ENCODE measurements at regions of chr20 and their contacts with region 1.

Region 1: DNA sequence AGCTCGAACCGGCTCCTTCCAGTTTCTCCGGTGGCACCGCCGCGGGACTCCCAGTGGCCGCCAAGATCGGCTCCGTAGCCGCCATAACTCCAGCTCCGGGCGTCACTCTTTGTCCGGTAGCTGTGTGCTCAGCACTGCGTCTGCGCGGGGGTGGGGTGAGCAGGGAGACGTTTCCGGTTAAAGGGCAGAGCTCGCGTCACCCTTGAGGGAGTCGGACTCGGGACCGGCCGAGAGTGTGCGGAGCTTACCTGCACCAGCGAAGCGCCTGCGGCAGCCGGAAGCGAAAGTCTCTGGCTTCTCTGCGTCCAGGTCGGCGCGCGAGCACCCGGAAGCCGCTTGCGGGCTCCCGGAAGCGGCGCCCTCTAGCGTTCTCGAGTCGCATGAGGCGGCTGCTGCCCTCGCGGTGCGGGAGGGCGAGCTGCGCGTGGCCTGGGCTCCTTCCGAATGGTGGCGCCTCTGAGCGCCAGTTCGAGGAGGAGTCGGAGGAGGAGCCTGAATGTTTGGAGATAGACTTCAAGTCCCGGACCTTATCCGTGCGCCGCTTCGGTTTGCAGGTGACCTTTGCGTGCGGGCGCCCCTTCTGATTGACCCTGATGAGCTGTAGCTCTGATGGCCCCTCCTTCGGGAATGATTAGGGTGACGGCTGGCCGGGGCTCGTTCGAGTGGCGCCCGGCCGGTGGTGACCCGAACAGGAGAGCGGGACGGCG is at the start of gene SCAND1:
- DNase-seq: peak; percentile 84
- H3K4me3 ChIP-seq: peak within 1 kb of the TSS; percentile 98
- H3K27me3 ChIP-seq: no peaks in the 10 kb centered on the region
- CTCF ChIP-seq: peak; percentile 98
- polyA plus RNA-seq, gene SCAND1: 10.8 and 15.8 TPM in 2 replicates

Region 2: GRCh38 chr20:35942243-35942642 is 12.1 kb before region 1 on chr20:
- CTCF ChIA-PET with region 1: interaction called, 18 read pairs
- POLR2A ChIA-PET with region 1: no interaction called
- DNase-seq: no peak
- H3K4me3 ChIP-seq: no peak overlapping the region
- H3K27me3 ChIP-seq: no peaks in the 10 kb centered on the region
- CTCF ChIP-seq: no peak

Region 3: DNA sequence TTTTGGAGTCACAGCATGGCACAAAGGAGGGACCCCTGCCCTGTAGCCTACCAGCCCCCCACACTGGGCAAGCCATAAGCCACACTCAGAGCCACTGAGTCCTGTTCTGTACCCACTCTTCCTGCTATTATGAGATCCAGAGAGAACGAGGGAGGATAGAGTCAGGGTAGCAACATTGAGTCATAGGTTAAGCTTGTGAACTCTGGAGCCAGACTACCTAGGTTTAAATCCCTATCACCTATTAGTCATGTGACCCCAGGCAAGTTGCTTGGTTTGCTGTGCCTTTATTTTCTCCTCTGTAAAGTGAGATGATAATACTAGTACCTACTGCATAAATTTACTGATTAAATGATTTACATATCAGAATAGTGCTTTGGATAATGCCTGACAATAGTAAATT is 14.6 kb after region 1 on chr20:
- CTCF ChIA-PET with region 1: interaction called, 28 read pairs
- POLR2A ChIA-PET with region 1: no interaction called
- DNase-seq: no peak
- H3K4me3 ChIP-seq: no peak overlapping the region
- H3K27me3 ChIP-seq: no peaks in the 10 kb centered on the region; the same call in none of the 2 replicates
- CTCF ChIP-seq: no peak